PC-3 (cell line): ENCODE measurements at regions of chr3 and their contacts with region 1.

Region 1: DNA sequence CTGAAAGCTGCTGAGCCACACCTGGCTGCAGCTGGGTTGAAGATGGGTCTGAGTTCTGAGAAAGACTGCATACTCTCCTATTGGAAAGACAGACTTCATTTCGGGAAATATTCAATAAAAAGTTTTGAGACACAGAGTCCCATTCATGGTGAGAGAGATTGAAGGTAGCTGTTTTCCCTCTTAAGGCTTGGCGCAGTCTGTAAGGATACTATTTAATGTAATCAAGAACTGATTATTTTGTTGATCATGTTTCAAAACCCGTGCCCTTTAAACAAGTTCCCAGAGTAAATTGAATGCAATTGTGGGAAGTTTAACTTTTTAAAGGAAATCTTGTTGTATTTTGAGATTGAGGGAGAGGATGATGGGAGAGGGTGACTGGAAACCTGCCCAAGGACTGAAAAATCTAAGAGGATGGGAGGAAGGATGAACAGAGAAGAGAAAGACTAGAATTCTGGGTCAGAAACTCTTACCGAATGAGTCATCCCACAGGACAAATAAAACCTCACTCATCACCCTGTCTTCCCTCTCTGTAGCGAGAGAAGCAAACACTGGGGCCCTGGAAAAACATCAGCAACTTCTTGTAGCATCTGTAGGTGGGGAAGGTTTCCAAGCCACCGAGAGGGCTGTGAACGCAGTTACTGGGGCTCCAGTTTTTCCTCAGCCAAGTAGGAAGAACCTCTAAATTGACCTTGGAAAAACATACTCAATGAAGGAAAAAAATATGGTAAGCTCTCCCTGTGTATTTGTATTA is 193.2 kb upstream of the TPRG1 start:
- DNase-seq: peak; percentile 81
- ATAC-seq: peak; percentile 59
- H3K4me3 ChIP-seq: no peak overlapping the region
- H3K27ac ChIP-seq: no peak overlapping the region
- H3K4me1 ChIP-seq: peaks cover 42% of the 10 kb centered on the region
- H3K27me3 ChIP-seq: no peaks in the 10 kb centered on the region
- CTCF ChIP-seq: no peak

Region 2: GRCh38 chr3:189003410-189003809 is 24.8 kb after region 1 on chr3:
- CTCF ChIA-PET with region 1: no interaction called
- POLR2A ChIA-PET with region 1: no interaction called
- intact Hi-C with region 1: no loop called
- DNase-seq: no peak
- ATAC-seq: no peak
- H3K4me3 ChIP-seq: no peak overlapping the region
- H3K27ac ChIP-seq: no peak overlapping the region
- H3K4me1 ChIP-seq: peaks cover 10% of the 10 kb centered on the region; the same call in 1 of the 2 replicates
- H3K27me3 ChIP-seq: no peaks in the 10 kb centered on the region
- CTCF ChIP-seq: no peak

Region 3: DNA sequence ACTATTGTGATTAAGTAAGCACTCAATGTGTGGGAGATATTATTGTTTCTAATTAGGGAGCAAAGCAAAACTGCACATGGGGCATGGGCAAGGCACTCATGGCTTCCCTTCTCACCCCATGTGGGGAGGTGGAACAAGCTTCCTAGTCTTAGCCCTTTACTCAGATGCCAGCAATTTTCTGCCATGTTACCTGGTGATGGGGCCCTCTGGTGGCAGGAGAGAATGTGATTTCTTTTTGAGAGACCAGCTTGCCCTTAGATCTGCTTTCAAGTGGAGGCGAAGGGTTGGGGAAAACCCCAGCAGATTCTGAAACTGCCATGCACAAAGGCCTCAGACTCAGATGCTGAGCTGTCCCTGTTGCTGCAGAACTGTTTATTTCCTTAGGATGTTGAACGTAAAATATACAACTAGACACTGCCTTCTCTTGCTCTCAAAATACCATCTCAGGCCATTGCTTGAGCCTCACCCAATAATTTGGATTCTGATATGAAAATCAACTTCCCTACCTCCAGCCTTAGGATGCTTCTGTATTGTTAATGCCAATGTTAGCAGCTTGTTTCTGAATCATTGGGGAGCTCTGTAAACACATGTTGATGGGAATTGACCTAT is 63.0 kb after region 1 on chr3:
- CTCF ChIA-PET with region 1: no interaction called
- POLR2A ChIA-PET with region 1: no interaction called
- intact Hi-C with region 1: loop called (anchors 5 kb)
- DNase-seq: peak; percentile 75
- ATAC-seq: peak; percentile 84
- H3K4me3 ChIP-seq: no peak overlapping the region
- H3K27ac ChIP-seq: no peak overlapping the region
- H3K4me1 ChIP-seq: no peaks in the 10 kb centered on the region
- H3K27me3 ChIP-seq: no peaks in the 10 kb centered on the region
- CTCF ChIP-seq: peak; percentile 86

Region 4: DNA sequence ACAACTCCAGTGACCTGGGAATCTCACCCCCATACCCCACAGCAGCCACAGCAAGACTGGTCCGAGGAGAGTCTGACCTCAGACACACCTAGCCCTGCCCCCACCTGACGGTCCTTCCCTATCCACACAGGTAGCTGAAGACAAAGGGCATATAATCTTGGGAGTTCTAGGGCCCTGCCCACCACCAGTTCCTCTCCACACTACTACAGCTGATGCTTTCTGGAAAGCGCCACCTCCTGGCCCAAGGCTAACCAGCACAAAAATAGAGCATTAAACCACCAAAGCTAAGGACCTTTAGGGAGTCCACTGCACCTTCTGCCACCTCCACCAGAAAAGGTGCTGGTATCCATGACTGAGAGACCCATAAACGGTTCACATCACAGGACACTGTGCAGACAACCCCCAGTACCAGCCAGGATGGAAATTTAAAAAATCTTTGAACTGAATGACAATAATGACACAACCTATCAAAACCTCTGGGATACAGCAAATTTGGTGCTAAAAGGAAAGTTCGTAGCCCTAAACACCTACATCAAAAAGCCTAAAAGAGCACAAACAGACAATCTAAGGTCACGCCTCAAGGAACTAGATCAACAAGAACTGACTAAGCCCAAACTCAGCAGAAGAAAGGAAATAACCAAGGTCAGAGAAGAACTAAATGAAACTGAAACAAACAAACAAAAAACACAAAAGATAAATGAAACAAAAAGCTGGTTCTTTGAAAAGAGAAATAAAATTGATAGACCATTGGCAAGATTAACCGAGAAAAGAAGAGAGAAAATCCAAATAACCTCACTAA is 71.0 kb after region 1 on chr3:
- CTCF ChIA-PET with region 1: no interaction called
- POLR2A ChIA-PET with region 1: no interaction called
- intact Hi-C with region 1: loop called (anchors 1 kb)
- DNase-seq: peak; percentile 21
- ATAC-seq: no peak
- H3K4me3 ChIP-seq: no peak overlapping the region
- H3K27ac ChIP-seq: no peak overlapping the region
- H3K4me1 ChIP-seq: no peaks in the 10 kb centered on the region
- H3K27me3 ChIP-seq: no peaks in the 10 kb centered on the region
- CTCF ChIP-seq: peak; percentile 52

Region 5: GRCh38 chr3:189132231-189132707 is 153.7 kb after region 1 on chr3:
- CTCF ChIA-PET with region 1: no interaction called
- POLR2A ChIA-PET with region 1: no interaction called
- intact Hi-C with region 1: loop called (anchors 1 kb)
- DNase-seq: peak; percentile 92
- ATAC-seq: peak; percentile 100
- H3K4me3 ChIP-seq: peak overlapping the region; percentile 26; the same call in 1 of the 2 replicates
- H3K27ac ChIP-seq: peak overlapping the region; percentile 11; the same call in 1 of the 2 replicates
- H3K4me1 ChIP-seq: peaks cover 15% of the 10 kb centered on the region
- H3K27me3 ChIP-seq: no peaks in the 10 kb centered on the region
- CTCF ChIP-seq: no peak

Region 6: DNA sequence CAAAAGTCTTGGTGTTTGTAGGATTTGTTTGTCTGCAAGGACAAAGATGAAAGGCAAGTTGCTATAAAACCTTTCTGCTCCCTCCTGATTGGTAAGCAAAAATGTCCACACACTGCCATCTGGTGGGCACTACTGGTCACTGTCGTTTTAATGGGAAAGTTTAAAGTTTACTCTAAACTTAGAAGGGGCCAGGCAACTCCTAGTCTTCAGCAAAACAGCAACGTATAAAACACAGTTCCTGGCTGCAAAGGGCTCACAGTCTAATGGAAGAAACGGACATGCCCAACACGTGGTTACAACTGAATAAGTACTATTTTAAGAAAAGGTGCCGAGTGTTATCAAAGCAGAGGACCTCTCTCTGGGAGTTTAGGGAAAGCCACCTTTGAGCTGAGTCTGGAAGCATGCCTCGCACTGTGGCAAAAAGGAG is 169.5 kb after region 1 on chr3:
- CTCF ChIA-PET with region 1: no interaction called
- POLR2A ChIA-PET with region 1: no interaction called
- intact Hi-C with region 1: loop called (anchors 2 kb)
- DNase-seq: peak; percentile 82
- ATAC-seq: peak; percentile 80
- H3K4me3 ChIP-seq: no peak overlapping the region
- H3K27ac ChIP-seq: no peak overlapping the region
- H3K4me1 ChIP-seq: no peaks in the 10 kb centered on the region
- H3K27me3 ChIP-seq: no peaks in the 10 kb centered on the region
- CTCF ChIP-seq: peak; percentile 90

Region 7: DNA sequence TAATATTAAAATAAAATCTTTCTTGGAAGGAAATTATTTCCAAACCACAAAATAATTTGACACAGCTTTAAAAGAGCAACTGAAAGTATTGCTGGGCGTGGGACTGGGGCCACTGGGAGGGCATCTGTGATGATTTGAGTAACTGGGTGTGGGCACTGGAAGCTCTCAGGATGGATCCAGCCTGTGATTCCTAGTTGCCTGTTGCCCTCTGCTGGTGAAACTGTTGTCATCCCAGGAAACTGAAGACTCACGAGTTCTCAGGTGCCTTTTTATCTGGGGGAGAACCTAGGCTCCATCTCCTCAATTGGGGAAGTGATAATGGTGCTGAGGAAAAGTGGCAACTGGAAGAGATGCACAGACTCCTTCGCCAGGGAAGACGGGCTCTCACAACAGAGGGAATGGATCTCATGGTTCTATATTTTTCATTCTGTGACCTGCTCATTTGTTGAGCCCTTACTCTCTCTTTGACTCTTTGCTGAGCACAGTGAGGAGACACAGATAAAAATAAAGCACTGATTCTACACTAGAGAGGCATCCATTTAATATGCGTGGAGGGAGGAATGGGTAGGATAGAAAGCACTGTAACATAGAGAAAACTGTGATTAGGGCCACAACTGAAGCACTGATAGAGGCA is 254.7 kb after region 1 on chr3:
- CTCF ChIA-PET with region 1: interaction called, 3 read pairs
- POLR2A ChIA-PET with region 1: no interaction called
- intact Hi-C with region 1: loop called (anchors 5 kb)
- DNase-seq: peak; percentile 84
- ATAC-seq: peak; percentile 98
- H3K4me3 ChIP-seq: no peak overlapping the region
- H3K27ac ChIP-seq: no peak overlapping the region
- H3K4me1 ChIP-seq: no peaks in the 10 kb centered on the region
- H3K27me3 ChIP-seq: no peaks in the 10 kb centered on the region
- CTCF ChIP-seq: peak; percentile 88